Dorsolateral prefrontal cortex (tissue), 120 donors: ENCODE measurements at regions of chr1 and their contacts with region 1.

Region 1: GRCh38 chr1:116311756-116312691 is 61.0 kb upstream of the ATP1A1 start:
- DNase-seq: peak in 9 of 10 donors; percentile 10 to 77 (median 58)
- H3K4me3 ChIP-seq: no peak overlapping the region
- H3K27ac ChIP-seq: peak overlapping the region in 57 of 59 donors; percentile 4 to 87 (median 69)
- H3K27me3 ChIP-seq: no peaks in the 10 kb centered on the region
- CTCF ChIP-seq: peak in 2 of 56 donors; percentile 11 to 17

Region 2: GRCh38 chr1:116433275-116434257 is 121.5 kb after region 1 on chr1:
- intact Hi-C with region 1: loop called in 1 of 2 experiments (anchors 1 kb)
- DNase-seq: peak; percentile 58 to 97 (median 92)
- H3K4me3 ChIP-seq: peak overlapping the region in 8 of 59 donors; percentile 8 to 30 (median 22)
- H3K27ac ChIP-seq: peak overlapping the region; percentile 80 to 99 (median 95)
- H3K27me3 ChIP-seq: no peaks in the 10 kb centered on the region
- CTCF ChIP-seq: peak in 12 of 56 donors; percentile 2 to 32 (median 17)